CD8-positive, alpha-beta memory T cell (primary cell): ENCODE measurements at regions of chr14 and their contacts with region 1.

Region 1: DNA sequence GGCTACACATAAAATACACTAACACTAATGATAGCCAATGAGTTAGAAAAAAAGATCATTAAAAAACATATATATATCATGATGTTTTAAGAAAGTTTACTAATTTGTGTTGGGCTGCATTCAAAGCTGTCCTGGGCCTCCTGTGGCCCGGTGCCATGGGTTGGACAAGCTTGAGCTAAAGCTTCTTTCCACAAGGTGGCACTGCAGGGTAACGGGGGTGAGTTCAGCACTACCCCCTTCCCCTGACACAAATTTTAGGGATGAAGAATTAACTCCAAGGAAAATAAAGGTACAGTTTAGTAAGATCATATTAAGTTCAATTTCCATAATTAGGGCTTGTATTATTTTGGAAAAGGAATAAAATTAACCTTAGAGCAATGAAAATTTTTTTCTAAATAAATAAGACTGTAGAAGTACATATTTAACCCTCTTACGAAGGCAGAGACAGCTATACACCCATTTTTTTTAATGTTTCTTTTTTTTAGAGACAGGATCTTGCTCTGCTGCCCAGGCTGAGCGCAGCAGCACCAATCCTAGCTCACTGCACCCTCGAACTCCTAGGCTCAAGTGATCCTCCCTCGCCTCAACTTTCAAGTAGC is 38.9 kb downstream of the PPP1R13B start:
- DNase-seq: peak; percentile 37 to 76 (median 52)
- H3K4me3 ChIP-seq: no peak overlapping the region
- H3K4me3 Mint-ChIP-seq: no peak overlapping the region
- H3K27ac ChIP-seq: no peak overlapping the region
- H3K27ac Mint-ChIP-seq: peak overlapping the region in 1 of 8 donors; percentile 57
- H3K4me1 ChIP-seq: no peaks in the 10 kb centered on the region
- H3K4me1 Mint-ChIP-seq: peaks cover 9 to 12% (median 11%) of the 10 kb centered on the region in 3 donors
- H3K27me3 ChIP-seq: no peaks in the 10 kb centered on the region
- H3K27me3 Mint-ChIP-seq: no peaks in the 10 kb centered on the region

Region 2: DNA sequence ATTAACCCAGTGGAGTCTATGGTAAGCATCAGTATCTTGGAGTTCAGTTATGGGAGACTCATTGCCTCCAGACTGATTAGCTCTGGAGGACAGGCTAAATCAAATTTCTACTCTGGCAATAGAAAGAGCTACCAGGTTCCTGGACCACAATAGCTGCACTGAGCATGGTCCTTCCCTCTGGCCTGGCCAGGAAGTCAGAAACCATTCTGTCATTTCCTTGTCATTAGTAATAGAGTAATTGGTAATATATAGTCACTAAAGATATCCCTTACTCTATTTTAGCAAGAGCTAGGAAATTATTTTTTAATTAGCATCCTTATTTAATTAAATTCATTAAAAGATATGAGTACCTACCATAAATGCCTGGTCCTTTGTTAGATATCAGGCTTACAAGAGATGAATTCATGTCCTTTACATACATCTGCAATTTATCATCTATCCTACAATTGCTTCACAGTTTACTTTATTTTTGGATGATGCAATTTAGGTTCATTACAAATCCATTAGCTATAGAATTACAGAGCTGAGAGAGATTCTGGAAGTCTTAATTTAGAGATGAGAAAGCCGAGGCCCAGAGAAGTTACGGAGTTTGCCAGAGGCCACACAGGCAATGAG is 96.1 kb after region 1 on chr14:
- CTCF ChIA-PET with region 1: interaction called, 56 read pairs
- POLR2A ChIA-PET with region 1: interaction called, 3 read pairs
- DNase-seq: no peak
- H3K4me3 ChIP-seq: no peak overlapping the region
- H3K4me3 Mint-ChIP-seq: no peak overlapping the region
- H3K27ac ChIP-seq: no peak overlapping the region
- H3K27ac Mint-ChIP-seq: peak overlapping the region in 2 of 8 donors; percentile 33 to 61
- H3K4me1 ChIP-seq: peaks cover 11% of the 10 kb centered on the region
- H3K4me1 Mint-ChIP-seq: peaks cover 12 to 23% (median 18%) of the 10 kb centered on the region in 3 donors
- H3K27me3 ChIP-seq: no peaks in the 10 kb centered on the region
- H3K27me3 Mint-ChIP-seq: peaks cover 3 to 6% of the 10 kb centered on the region in 2 donors